AG04449 (cell line): ENCODE measurements at regions of chr1 and their contacts with region 1.

Region 1: GRCh38 chr1:153352523-153352922 is 3.9 kb upstream of the PGLYRP4 start:
- DNase-seq: peak; percentile 2
- H3K4me3 ChIP-seq: no peak overlapping the region
- CTCF ChIP-seq: peak; percentile 82

Region 2: GRCh38 chr1:153337980-153338853 is 14.3 kb before region 1 on chr1:
- CTCF ChIA-PET with region 1: interaction called, 16 read pairs
- POLR2A ChIA-PET with region 1: no interaction called
- DNase-seq: no peak
- H3K4me3 ChIP-seq: no peak overlapping the region
- CTCF ChIP-seq: no peak

Region 3: DNA sequence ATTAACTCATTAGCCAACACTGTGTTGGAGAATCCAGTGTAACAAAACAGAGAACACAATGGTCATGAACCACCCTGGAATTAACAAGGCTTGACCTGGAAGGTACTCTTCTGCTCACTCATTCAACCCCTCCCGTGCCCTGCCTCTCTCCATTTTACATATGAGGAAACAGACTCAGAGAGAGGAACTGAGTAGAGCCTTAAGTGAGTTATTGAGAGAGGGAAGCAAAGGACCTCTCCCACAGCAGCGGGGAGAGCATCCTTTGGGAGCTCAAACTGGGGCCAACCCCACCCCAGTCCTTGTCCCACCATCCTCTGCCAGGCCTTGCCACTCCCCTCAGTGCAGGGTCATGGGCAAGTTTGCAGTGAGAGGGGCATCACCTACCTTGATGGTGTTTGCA is 21.5 kb after region 1 on chr1:
- CTCF ChIA-PET with region 1: interaction called, 16 read pairs
- POLR2A ChIA-PET with region 1: no interaction called
- DNase-seq: no peak
- H3K4me3 ChIP-seq: no peak overlapping the region
- CTCF ChIP-seq: no peak